CD4-positive, alpha-beta memory T cell (primary cell): ENCODE measurements at regions of chr20 and their contacts with region 1.

Region 1: GRCh38 chr20:18137412-18138265 is at the starts of genes KAT14 and PET117:
- DNase-seq: peak; percentile 89 to 95 (median 92)
- H3K4me3 ChIP-seq: peak within 1 kb of the TSS; percentile 71 to 87
- H3K4me3 Mint-ChIP-seq: peak within 1 kb of the TSS; percentile 88 to 94 (median 90)
- H3K27ac ChIP-seq: peak within 1 kb of the TSS; percentile 78
- H3K27ac Mint-ChIP-seq: peak within 1 kb of the TSS; percentile 89 to 96 (median 92)
- H3K4me1 ChIP-seq: peaks cover 34% of the 10 kb centered on the region
- H3K4me1 Mint-ChIP-seq: peaks cover 22 to 43% (median 30%) of the 10 kb centered on the region in 4 donors
- H3K27me3 ChIP-seq: no peaks in the 10 kb centered on the region
- H3K27me3 Mint-ChIP-seq: no peaks in the 10 kb centered on the region
- total RNA-seq, gene KAT14: 22.4 to 24.0 TPM
- total RNA-seq, gene PET117: 14.1 to 15.0 TPM

Region 2: DNA sequence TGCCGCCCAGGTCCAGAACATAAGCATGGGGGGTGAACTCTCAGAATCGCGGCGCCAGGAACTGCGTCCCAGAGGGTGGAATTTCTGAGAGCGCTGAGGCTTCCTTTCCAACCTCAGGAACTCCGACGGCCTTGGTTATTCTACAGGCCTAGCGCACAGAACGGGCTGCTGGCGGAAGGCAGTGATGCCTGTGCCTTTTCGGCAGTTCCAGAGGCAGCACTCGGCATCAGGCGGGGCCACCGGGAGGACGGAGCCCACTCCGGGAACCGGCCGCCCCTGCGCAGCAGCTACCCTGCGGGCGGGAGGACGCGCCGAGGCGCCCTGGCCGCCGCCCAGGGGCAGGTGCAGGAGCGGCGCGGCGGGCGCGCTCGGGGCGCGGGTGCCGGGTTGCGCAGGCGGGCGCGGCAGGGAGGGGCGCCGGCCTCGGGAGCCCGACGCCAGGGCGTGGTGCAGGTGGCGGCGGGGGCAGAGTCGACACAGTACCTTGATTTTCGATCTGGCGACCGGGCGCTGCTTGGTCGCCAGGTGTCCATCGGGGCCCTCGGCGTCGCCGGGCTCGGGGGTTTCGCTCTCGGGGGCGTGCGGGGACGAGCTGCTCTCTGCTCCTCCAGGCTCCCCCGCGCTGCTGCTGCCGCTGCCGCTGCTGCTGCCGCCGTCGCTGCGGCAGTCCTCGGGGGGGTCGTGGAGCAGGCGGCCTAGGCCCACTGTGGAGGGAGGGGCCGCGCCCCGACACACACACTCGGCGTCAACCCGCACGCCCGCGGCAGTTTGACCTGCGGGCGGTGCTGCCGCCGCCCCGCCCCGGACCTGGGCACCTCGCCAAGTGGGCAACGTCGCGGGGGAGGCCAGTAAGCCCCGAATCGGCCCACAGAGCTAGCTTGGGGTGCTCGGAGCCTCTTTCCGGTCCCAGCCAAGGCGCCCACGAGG is 81.2 kb before region 1 on chr20:
- CTCF ChIA-PET with region 1: no interaction called
- POLR2A ChIA-PET with region 1: no interaction called
- intact Hi-C with region 1: no loop called
- DNase-seq: no peak
- H3K4me3 ChIP-seq: no peak overlapping the region
- H3K4me3 Mint-ChIP-seq: peak overlapping the region; percentile 48 to 82 (median 68)
- H3K27ac ChIP-seq: no peak overlapping the region
- H3K27ac Mint-ChIP-seq: no peak overlapping the region
- H3K4me1 ChIP-seq: no peaks in the 10 kb centered on the region
- H3K4me1 Mint-ChIP-seq: peaks cover 2 to 11% (median 8%) of the 10 kb centered on the region in 4 donors
- H3K27me3 ChIP-seq: peaks cover 29% of the 10 kb centered on the region
- H3K27me3 Mint-ChIP-seq: peaks cover 43 to 52% of the 10 kb centered on the region in 2 donors

Region 3: DNA sequence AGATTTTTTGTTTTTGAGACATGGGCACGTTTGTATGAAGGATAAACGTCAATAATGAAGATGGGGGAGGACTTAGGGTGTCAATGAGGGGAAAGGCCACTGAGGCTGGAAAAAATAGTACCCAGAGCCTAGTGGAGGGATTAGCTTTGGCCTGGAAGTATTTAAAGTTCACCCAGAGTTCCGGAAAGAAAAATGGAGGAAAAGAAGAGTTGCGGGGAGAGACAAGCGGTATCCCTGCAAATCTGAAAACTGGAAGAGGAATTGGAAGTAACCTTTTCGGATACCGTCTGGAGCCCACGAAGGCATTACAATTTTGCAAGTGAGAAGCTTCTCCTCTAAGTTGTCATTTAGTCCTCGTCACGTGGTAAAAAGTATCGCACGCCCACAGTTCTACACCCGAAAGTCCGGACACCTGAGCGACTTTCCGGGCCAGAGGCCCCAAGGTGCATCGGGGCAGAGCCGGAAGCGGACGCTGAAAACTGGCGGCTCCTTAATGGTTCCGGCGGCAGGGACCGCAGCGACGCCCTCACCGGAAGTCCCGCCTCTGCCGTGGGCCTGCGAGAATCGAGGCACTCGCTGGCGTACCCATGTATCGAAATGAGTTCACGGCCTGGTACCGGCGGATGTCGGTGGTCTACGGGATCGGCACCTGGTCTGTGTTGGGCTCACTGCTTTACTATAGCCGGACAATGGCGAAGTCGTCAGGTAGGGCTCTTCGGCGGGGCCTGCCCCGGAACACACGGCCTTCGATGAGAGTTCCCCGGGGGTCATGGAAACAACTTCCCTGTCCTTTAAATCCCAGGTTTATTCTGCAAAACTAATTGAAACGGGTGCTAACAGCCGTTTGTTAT is 429.5 kb after region 1 on chr20 and contains the start of gene SMIM26:
- CTCF ChIA-PET with region 1: no interaction called
- POLR2A ChIA-PET with region 1: interaction called, 4 read pairs
- intact Hi-C with region 1: loop called (anchors 10 kb)
- DNase-seq: peak; percentile 92 to 94 (median 93)
- H3K4me3 ChIP-seq: peak within 1 kb of the TSS; percentile 77 to 78
- H3K4me3 Mint-ChIP-seq: peak within 1 kb of the TSS; percentile 94 to 99 (median 97)
- H3K27ac ChIP-seq: peak within 1 kb of the TSS; percentile 96
- H3K27ac Mint-ChIP-seq: peak within 1 kb of the TSS; percentile 93 to 100 (median 99)
- H3K4me1 ChIP-seq: peaks cover 13% of the 10 kb centered on the region
- H3K4me1 Mint-ChIP-seq: peaks cover 9 to 34% (median 14%) of the 10 kb centered on the region in 4 donors
- H3K27me3 ChIP-seq: no peaks in the 10 kb centered on the region
- H3K27me3 Mint-ChIP-seq: no peaks in the 10 kb centered on the region
- total RNA-seq, gene SMIM26: 60.2 to 64.2 TPM